Posterior vena cava (tissue), 2 donors: ENCODE measurements at regions of chr2 and their contacts with region 1.

Region 1: GRCh38 chr2:204325468-204325867 is 219.8 kb upstream of the PARD3B start:
- DNase-seq: no peak

Region 2: GRCh38 chr2:204260162-204260877 is 65.1 kb before region 1 on chr2:
- intact Hi-C with region 1: loop called in 1 of 2 experiments (anchors 10 kb)
- DNase-seq: peak; percentile 87

Region 3: DNA sequence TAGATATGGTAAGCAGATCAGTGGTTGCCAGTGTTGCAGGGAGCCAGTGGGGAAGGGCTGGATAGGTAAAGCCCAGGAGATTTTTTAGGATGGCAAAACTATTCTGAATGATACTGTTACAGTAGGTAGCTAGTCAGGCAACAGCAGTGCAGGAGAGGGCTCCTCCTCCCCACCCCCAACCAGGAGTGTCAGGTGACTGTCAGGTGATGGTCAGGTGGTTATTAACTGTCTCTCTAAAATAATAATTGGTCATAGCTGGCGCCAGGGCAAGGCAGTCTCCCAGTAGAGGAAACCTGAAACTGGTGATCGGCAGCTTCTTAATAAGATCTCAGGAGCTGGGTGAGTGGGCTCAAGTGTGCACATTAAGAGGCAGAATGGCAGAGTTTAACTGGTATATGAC is 18.2 kb after region 1 on chr2:
- intact Hi-C with region 1: no loop called
- DNase-seq: no peak

Region 4: DNA sequence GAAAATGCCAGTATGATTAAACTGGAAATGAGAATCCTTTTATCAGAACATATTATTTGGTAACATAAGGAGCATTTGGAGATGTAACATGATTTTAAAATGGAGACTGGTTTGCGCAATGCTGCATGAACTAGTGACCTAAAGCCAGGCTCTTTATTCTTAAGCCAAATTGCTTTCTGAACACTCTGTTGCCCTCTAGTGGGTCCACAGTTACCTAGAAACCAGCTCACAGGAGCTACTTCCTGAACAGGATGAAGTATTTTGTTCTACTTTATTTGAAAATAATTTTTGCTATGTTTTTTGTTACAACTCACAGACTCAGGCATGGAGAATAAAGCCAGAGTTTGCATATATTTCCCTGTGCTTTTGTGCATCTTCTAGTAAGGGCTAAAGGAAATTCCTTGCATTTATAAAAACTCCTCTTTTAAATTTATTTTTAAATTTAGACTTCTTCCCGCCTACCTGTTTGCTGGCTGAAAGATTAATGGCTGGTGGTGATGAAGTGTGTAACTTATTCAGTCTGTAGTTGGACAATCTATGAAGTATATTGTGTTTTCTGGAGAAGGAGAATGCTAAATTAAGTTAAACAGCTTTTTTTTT is 366.5 kb after region 1 on chr2:
- intact Hi-C with region 1: loop called in 1 of 2 experiments (anchors 5 kb)
- DNase-seq: no peak

Region 5: GRCh38 chr2:205680067-205680466 is 1354.6 kb after region 1 on chr2:
- intact Hi-C with region 1: loop called in 1 of 2 experiments (anchors 10 kb)
- DNase-seq: no peak